ENCODE measurements at regions of chr14 and their contacts with region 1.

Region 1: DNA sequence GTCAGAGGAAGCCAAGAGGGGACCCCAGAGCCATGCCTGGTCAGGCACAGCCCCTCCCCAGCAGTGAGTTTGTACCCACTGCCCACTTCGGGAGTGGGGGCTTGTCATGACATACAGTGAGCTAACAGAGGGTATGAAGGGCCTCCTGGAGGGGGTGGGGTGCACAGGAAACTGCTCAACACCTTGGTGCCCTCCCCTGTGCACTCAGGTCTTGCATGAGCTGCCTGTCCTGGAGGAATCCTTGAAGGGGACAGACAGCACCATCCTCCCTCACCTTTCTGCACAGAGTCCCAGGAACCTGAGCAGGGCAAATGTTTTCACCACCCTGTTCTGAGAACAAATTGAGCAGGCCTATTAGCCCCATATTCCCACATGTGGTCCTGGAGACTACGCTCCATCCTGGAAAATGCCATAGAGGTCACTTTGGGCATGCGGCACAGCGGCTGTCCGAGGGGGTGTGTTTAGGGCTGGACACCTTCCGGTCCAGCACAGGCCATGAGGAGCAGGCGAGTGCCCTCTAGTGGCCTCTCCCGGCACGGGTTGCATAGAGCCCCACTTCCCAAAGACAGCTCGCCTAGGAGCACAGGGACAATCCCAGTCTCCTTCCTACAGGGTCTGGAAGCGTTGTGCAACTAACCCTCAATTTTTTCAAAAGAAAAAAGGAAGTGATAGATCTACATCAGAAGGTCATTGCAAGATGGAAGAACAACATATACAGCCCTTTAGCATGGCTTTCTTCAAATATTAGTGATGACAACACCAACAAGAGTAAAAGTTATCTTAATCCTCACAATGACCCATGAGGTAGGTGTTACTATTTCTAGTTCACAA is 31.9 kb upstream of the ZFP36L1 start:
- DNase-seq: peak; percentile 35
- H3K4me3 ChIP-seq: no peak overlapping the region
- H3K27ac ChIP-seq: no peak overlapping the region
- H3K4me1 ChIP-seq: peaks cover 1% of the 10 kb centered on the region
- H3K27me3 ChIP-seq: no peaks in the 10 kb centered on the region
- CTCF ChIP-seq: peak in 3 of 4 experiments; percentile 58 to 67 (median 64)
- POLR2A ChIP-seq: no peak

Region 2: GRCh38 chr14:67846029-67846610 is 978.6 kb before region 1 on chr14:
- intact Hi-C with region 1: loop called (anchors 10 kb)
- DNase-seq: no peak
- H3K4me3 ChIP-seq: no peak overlapping the region
- H3K27ac ChIP-seq: no peak overlapping the region
- H3K4me1 ChIP-seq: no peaks in the 10 kb centered on the region
- H3K27me3 ChIP-seq: no peaks in the 10 kb centered on the region
- CTCF ChIP-seq: no peak
- POLR2A ChIP-seq: no peak